ENCODE measurements at regions of chr1 and their contacts with region 1.

Region 1: GRCh38 chr1:205294175-205294913 is 27.2 kb downstream of the NUAK2 start:
- DNase-seq: no peak
- ATAC-seq: peak; percentile 69
- H3K4me3 ChIP-seq: no peak overlapping the region
- H3K27ac ChIP-seq: no peak overlapping the region
- H3K4me1 ChIP-seq: peaks cover 6% of the 10 kb centered on the region
- H3K27me3 ChIP-seq: no peaks in the 10 kb centered on the region; a peak in 1 of 4 replicates
- CTCF ChIP-seq: no peak
- EP300 ChIP-seq: peak in 1 of 2 experiments; percentile 46; a peak in 1 of 4 replicates
- POLR2A ChIP-seq: no peak
- RAD21 ChIP-seq: no peak

Region 2: DNA sequence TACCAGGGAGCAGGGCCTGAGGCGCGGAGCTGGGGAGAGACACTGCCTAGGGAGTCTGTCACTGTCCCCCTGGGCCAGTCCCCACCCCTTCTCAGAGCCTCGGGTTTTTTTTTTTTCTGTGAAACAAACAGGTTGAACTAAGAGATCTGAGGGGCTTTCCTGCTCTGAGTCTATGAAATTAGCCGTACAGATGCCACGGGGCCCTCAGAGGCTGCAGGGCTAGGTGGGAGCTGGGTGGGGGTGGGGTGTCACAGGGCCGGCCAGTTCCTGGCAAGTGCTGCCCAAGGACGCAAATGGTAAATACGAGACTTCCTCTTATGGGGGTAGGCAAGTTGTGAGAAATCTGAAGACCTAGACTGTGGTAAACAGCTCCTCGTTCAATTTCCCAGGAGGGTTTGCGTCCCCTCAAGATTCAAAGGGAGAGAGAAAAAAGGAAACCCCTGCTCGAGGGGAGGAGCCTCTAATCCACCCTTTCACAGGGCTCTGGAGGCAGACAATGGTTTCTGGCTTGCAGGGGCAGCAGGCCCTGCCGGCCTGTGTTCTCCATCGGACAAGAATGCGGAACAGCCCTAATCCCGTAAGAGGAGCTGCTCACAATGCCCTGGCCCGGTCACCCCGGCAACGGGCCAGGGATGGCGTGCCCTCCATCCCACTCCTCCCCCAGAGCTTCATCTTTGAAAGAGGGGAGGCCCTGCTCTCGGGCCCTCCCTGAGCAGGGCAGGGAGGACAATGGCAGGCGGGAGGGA is 19.4 kb after region 1 on chr1:
- CTCF ChIA-PET with region 1: interaction called, 2,333 read pairs
- POLR2A ChIA-PET with region 1: interaction called, 151 read pairs
- RAD21 ChIA-PET with region 1: interaction called, 527 read pairs
- SMC1A ChIA-PET with region 1: interaction called, 1,445 read pairs
- in situ Hi-C with region 1: no loop called
- intact Hi-C with region 1: no loop called
- DNase-seq: peak; percentile 48
- ATAC-seq: peak; percentile 86
- H3K4me3 ChIP-seq: peak overlapping the region; percentile 35; the same call in 1 of the 2 replicates
- H3K27ac ChIP-seq: no peak overlapping the region; the same call in 1 of the 2 replicates
- H3K4me1 ChIP-seq: peaks cover 30% of the 10 kb centered on the region
- H3K27me3 ChIP-seq: no peaks in the 10 kb centered on the region; a peak in 1 of 4 replicates
- CTCF ChIP-seq: no peak
- EP300 ChIP-seq: peak; percentile 68; a peak in 2 of 4 replicates
- POLR2A ChIP-seq: no peak; the same call in 1 of the 2 replicates
- RAD21 ChIP-seq: no peak